Activated CD4-positive, alpha-beta memory T cell treated with anti-CD3 and anti-CD28 coated beads, Interleukin-2, amount 10 ng/mL, durations not matched to agents 7 days and 5 days (primary cell): ENCODE measurements at regions of chr17 and their contacts with region 1.

Region 1: GRCh38 chr17:57671667-57672632 is 73.1 kb downstream of the CCDC182 start:
- DNase-seq: peak; percentile 77
- H3K4me3 Mint-ChIP-seq: no peak overlapping the region
- H3K27ac Mint-ChIP-seq: peak overlapping the region; percentile 82
- H3K4me1 Mint-ChIP-seq: peaks cover 31% of the 10 kb centered on the region
- H3K27me3 Mint-ChIP-seq: no peaks in the 10 kb centered on the region

Region 2: GRCh38 chr17:57604771-57605674 is 66.9 kb before region 1 on chr17:
- CTCF ChIA-PET with region 1: interaction called, 122 read pairs
- POLR2A ChIA-PET with region 1: interaction called, 3 read pairs
- DNase-seq: peak; percentile 38
- H3K4me3 Mint-ChIP-seq: peak overlapping the region; percentile 33
- H3K27ac Mint-ChIP-seq: peak overlapping the region; percentile 96
- H3K4me1 Mint-ChIP-seq: peaks cover 82% of the 10 kb centered on the region
- H3K27me3 Mint-ChIP-seq: no peaks in the 10 kb centered on the region

Region 3: DNA sequence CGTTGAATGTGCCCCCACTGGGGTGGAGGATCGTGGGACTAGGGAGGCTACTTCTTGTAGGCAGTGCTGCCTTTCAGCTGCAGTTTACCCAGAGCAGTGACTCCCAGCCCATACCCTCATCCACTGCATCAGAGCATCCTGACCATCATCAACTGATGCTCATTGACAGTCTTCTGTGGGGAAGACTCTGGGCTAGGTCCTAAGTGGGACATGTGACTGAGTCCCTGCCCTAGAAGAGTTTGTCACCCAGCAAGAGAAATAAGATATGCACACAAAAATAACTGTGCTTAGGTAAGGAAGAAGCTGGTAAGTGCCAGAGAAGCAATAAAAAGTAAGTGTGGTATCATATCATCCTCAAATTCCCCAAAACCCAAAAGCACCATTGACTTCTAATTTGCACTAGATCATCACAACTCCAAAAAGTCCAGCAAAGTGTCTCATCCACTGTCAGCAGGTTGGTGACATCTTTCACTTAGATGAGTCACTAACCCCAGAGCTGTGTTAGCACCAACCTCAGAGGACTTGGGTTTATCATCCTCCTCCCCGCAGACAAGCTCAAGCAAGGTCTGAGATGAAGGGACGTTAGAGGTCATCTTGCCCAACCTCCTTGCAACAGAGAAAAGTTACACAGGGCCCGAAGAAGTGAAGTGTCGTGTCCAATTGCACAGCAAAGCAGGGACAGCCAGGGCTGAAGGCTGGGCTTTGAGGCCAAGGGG is 25.8 kb before region 1 on chr17:
- CTCF ChIA-PET with region 1: interaction called, 19 read pairs
- POLR2A ChIA-PET with region 1: no interaction called
- DNase-seq: peak; percentile 29
- H3K4me3 Mint-ChIP-seq: no peak overlapping the region
- H3K27ac Mint-ChIP-seq: peak overlapping the region; percentile 68
- H3K4me1 Mint-ChIP-seq: peaks cover 13% of the 10 kb centered on the region
- H3K27me3 Mint-ChIP-seq: no peaks in the 10 kb centered on the region